ENCODE measurements at regions of chr13 and their contacts with region 1.

Region 1: DNA sequence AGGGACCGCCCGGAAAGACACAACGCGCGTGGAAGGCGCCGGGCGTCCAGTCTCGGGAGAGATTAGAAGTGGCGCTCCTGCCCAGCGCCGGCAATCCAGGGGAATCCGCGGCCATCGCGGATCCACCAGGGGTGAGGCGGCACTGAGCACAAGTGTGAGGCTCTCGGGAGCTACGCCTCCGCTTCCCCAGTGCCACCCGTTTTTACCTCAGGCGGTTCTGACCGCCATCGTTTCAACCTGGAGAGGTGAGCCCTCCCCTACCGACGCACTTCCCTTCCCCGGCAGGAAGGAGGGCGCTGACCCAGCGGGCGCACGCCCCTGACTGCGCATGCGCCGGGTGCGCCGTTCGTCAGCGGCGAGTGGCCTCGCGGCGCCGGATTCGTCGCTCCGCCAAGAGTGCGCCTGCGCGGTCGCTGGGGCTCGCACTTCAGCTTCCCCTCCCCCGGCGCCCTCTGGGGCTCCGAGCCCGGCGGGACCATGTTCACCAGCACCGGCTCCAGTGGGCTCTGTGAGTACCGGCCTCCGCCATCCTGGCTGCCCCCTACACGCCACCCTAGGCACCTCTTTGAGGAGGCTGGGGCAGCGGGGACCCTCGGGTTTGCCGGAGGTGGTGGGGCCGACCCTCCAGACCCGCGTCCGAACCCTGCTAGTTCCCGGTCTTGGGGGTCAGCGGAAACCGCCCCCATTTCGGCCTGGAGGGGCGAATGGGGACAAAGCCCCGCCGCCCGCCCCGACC is at the start of gene UBAC2:
- DNase-seq: peak; percentile 90 to 96
- H3K4me3 ChIP-seq: peak within 1 kb of the TSS; percentile 81 to 94 (median 88)
- H3K27ac ChIP-seq: peak within 1 kb of the TSS; percentile 94
- H3K4me1 ChIP-seq: peaks cover 0 to 7% (median under 1%) of the 10 kb centered on the region in 4 experiments; a peak in 3 of 7 replicates
- H3K27me3 ChIP-seq: no peaks in the 10 kb centered on the region
- CTCF ChIP-seq: no peak
- EP300 ChIP-seq: no peak
- POLR2A ChIP-seq: peak; percentile 99
- RAD21 ChIP-seq: no peak
- total RNA-seq, gene UBAC2: 73.6 and 75.9 TPM in 2 replicates

Region 2: GRCh38 chr13:99214232-99214631 is 13.6 kb after region 1 on chr13:
- CTCF ChIA-PET with region 1: interaction called, 10 read pairs
- POLR2A ChIA-PET with region 1: interaction called, 23 read pairs
- DNase-seq: no peak
- H3K4me3 ChIP-seq: peak overlapping the region in 1 of 4 experiments; percentile 2; a peak in 1 of 8 replicates
- H3K27ac ChIP-seq: no peak overlapping the region
- H3K4me1 ChIP-seq: peaks cover 4 to 15% (median 11%) of the 10 kb centered on the region in 4 experiments; a peak in 6 of 7 replicates
- H3K27me3 ChIP-seq: no peaks in the 10 kb centered on the region
- CTCF ChIP-seq: no peak
- EP300 ChIP-seq: no peak
- POLR2A ChIP-seq: no peak
- RAD21 ChIP-seq: no peak

Region 3: GRCh38 chr13:99231721-99232120 is 31.1 kb after region 1 on chr13:
- CTCF ChIA-PET with region 1: interaction called, 8 read pairs
- POLR2A ChIA-PET with region 1: interaction called, 20 read pairs
- DNase-seq: no peak
- H3K4me3 ChIP-seq: no peak overlapping the region
- H3K27ac ChIP-seq: no peak overlapping the region
- H3K4me1 ChIP-seq: no peaks in the 10 kb centered on the region; a peak in 1 of 7 replicates
- H3K27me3 ChIP-seq: no peaks in the 10 kb centered on the region
- CTCF ChIP-seq: no peak
- EP300 ChIP-seq: no peak
- POLR2A ChIP-seq: no peak
- RAD21 ChIP-seq: no peak

Region 4: GRCh38 chr13:99258210-99258860 is 57.7 kb after region 1 on chr13 and contains the start of gene GPR18:
- CTCF ChIA-PET with region 1: interaction called, 65 read pairs
- POLR2A ChIA-PET with region 1: interaction called, 20 read pairs
- DNase-seq: no peak
- H3K4me3 ChIP-seq: no peak within 1 kb of the TSS
- H3K27ac ChIP-seq: no peak within 1 kb of the TSS
- H3K4me1 ChIP-seq: no peaks in the 10 kb centered on the region
- H3K27me3 ChIP-seq: no peaks in the 10 kb centered on the region
- CTCF ChIP-seq: no peak
- EP300 ChIP-seq: no peak
- POLR2A ChIP-seq: no peak
- RAD21 ChIP-seq: no peak
- total RNA-seq, gene GPR18: not detected in 2 replicates